ENCODE measurements at regions of chr5 and their contacts with region 1.

Region 1: DNA sequence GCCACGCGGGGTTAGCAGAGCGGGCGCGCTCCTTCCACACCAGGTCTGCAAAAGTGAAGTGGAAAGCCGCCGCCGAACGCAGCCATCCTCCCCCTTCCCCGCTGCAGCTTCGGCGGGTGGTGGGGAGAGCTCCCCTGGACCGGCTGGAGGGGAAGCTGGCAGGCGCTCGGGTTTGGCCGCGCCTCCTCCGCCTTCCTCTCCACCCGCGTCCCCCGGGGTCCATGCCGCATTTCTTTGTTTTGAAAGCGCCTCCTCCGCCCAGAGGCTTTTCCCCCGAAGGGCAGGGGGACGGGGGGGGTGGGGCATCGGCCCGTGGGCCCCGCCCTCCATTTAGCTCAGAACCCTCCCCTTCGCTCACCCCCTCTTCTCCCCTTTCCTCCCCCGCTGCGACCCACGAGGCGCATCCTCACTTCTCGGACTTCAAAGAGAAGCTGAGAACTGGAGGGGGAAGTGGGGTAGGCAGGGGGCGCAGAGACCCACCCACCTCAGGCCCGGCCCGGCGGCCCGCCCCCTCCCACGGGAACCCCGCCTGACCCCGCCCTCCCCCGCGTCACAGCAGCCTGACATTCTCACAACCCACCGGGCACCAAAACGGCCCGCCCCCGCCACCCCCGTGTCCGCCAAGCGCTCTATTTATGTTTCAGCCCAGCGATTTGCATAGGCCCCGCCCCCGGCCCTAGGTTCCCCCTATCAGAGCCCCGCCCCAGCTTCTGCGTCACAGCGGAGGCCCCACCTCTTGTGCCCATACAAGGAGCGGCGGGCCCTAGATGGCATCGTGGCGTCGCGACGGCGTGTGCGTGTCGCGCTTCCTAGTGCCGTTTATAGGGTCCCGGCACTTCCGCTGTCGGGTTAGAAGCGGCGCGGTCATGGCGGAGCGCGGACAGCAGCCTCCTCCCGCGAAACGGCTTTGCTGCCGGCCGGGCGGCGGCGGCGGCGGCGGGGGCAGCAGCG is at the start of gene ZSWIM6:
- DNase-seq: peak; percentile 97
- H3K4me3 Mint-ChIP-seq: peak within 1 kb of the TSS; percentile 84
- H3K27ac Mint-ChIP-seq: peak within 1 kb of the TSS; percentile 86
- H3K4me1 Mint-ChIP-seq: peaks cover 52% of the 10 kb centered on the region
- H3K27me3 Mint-ChIP-seq: no peaks in the 10 kb centered on the region
- CTCF ChIP-seq: no peak
- total RNA-seq, gene ZSWIM6: 13.2 and 14.7 TPM in 2 replicates

Region 2: GRCh38 chr5:61167382-61167781 is 164.3 kb before region 1 on chr5:
- CTCF ChIA-PET with region 1: interaction called, 3 read pairs
- intact Hi-C with region 1: loop called (anchors 1 kb)
- DNase-seq: peak; percentile 37
- H3K4me3 Mint-ChIP-seq: no peak overlapping the region
- H3K27ac Mint-ChIP-seq: no peak overlapping the region
- H3K4me1 Mint-ChIP-seq: peaks cover 16% of the 10 kb centered on the region
- H3K27me3 Mint-ChIP-seq: no peaks in the 10 kb centered on the region
- CTCF ChIP-seq: peak; percentile 16

Region 3: GRCh38 chr5:61290791-61291210 is 40.9 kb before region 1 on chr5:
- CTCF ChIA-PET with region 1: interaction called, 3 read pairs
- intact Hi-C with region 1: loop called (anchors 5 kb)
- DNase-seq: peak; percentile 67
- H3K4me3 Mint-ChIP-seq: peak overlapping the region; percentile 68
- H3K27ac Mint-ChIP-seq: peak overlapping the region; percentile 99
- H3K4me1 Mint-ChIP-seq: peaks cover 74% of the 10 kb centered on the region
- H3K27me3 Mint-ChIP-seq: no peaks in the 10 kb centered on the region
- CTCF ChIP-seq: no peak

Region 4: DNA sequence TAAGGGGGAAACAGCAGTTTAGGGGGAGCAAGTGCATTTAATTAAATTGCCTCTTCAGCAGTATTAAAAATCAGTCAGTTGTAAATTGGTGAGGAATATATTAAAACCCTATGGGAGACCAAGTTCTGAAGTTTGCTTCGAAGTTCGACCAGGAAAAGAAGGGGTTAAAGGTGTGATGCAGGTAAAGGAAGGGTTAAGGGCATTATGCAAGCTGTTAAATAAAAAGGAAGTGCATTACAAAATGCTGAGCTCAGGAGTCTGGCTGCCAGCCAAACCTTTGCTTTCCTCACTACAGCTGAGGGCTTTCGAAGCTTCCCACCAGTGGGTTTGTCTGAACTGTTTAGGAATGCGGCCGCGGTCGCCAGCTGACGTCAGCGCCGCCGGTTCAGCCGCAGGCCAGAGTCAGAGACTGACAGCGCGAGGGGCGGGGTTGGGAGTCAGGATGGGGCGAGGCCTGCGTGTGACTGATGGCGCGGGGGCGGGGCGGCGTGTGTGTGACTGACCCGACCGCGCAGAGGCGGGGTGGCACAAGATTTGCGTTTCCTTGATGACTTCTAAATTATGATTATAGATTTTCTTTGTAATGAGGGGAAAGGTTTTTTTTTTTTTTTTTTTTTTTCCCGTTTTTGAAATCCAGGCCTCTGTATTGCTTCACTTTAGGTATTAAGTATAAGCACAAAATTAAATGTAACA is 76.9 kb after region 1 on chr5:
- CTCF ChIA-PET with region 1: no interaction called
- intact Hi-C with region 1: loop called (anchors 1 kb)
- DNase-seq: peak; percentile 99
- H3K4me3 Mint-ChIP-seq: peak overlapping the region; percentile 64
- H3K27ac Mint-ChIP-seq: peak overlapping the region; percentile 65
- H3K4me1 Mint-ChIP-seq: peaks cover 23% of the 10 kb centered on the region
- H3K27me3 Mint-ChIP-seq: no peaks in the 10 kb centered on the region
- CTCF ChIP-seq: no peak

Region 5: DNA sequence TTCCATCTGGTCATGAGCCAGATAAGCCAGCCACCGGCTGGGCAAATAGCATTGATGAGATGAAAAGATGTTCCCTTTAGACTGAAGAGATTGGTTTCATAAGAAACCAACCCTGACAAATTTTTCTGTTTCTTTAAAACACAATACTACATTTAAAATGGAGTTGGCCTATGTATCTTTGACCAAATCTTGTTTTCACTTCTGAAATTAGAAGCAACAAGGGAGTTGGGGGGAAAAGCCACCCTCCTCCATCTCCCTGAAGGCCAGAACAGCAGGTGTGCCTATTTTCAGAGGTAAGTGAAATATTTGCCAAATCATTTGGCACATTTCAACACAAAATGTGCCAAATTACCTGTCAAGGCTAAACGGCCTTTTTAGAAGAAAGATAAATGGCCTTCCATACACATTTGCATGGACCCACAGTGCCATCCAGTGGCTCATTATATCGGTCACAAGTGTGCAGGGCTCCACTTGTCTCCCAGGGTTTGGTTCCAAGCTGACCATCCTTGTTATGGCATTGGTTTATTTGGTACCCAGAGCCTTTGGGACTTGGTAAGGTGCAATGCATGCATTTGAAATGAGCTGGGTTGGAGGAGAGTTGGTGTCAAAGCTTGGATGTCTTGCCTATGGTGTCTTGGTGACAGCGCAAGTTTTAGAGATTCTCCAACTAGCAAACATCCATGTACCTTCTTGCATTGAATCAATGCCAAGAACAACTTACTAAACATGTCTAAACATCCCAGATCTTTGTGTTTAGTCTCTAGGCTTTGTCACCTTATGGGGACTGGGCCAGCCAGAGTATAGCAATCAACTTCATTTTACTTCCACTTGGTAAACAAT is 602.3 kb after region 1 on chr5:
- CTCF ChIA-PET with region 1: no interaction called
- intact Hi-C with region 1: loop called (anchors 10 kb)
- DNase-seq: peak; percentile 70
- H3K4me3 Mint-ChIP-seq: no peak overlapping the region
- H3K27ac Mint-ChIP-seq: no peak overlapping the region
- H3K4me1 Mint-ChIP-seq: no peaks in the 10 kb centered on the region
- H3K27me3 Mint-ChIP-seq: no peaks in the 10 kb centered on the region
- CTCF ChIP-seq: peak; percentile 75

Measured in Calu3 (cell line).